Activated CD4-positive, alpha-beta T cell treated with anti-CD3 and anti-CD28 coated beads for 36 hours (primary cell): ENCODE measurements at regions of chr7 and their contacts with region 1.

Region 1: GRCh38 chr7:28155019-28155660 is 25.5 kb downstream of the JAZF1 start:
- DNase-seq: peak; percentile 15
- ATAC-seq: peak; percentile 68
- H3K4me3 Mint-ChIP-seq: no peak overlapping the region
- H3K27ac Mint-ChIP-seq: peak overlapping the region; percentile 77
- H3K4me1 Mint-ChIP-seq: peaks cover 65% of the 10 kb centered on the region
- H3K27me3 Mint-ChIP-seq: no peaks in the 10 kb centered on the region

Region 2: GRCh38 chr7:27739909-27740448 is 415.2 kb before region 1 on chr7 and contains the start of gene TAX1BP1:
- CTCF ChIA-PET with region 1: no interaction called
- POLR2A ChIA-PET with region 1: no interaction called
- intact Hi-C with region 1: loop called in 1 of 2 experiments (anchors 1 kb)
- DNase-seq: peak; percentile 98
- ATAC-seq: peak; percentile 92
- H3K4me3 Mint-ChIP-seq: peak within 1 kb of the TSS; percentile 99
- H3K27ac Mint-ChIP-seq: peak within 1 kb of the TSS; percentile 99
- H3K4me1 Mint-ChIP-seq: peaks cover 34% of the 10 kb centered on the region
- H3K27me3 Mint-ChIP-seq: no peaks in the 10 kb centered on the region
- total RNA-seq, gene TAX1BP1: 101 to 109 TPM

Region 3: GRCh38 chr7:28037220-28038010 is 117.7 kb before region 1 on chr7:
- CTCF ChIA-PET with region 1: no interaction called
- POLR2A ChIA-PET with region 1: no interaction called
- intact Hi-C with region 1: loop called (anchors 1 to 2 kb)
- DNase-seq: peak; percentile 56
- ATAC-seq: peak; percentile 91
- H3K4me3 Mint-ChIP-seq: peak overlapping the region; percentile 12
- H3K27ac Mint-ChIP-seq: no peak overlapping the region
- H3K4me1 Mint-ChIP-seq: peaks cover 36% of the 10 kb centered on the region
- H3K27me3 Mint-ChIP-seq: peaks cover 10% of the 10 kb centered on the region

Region 4: GRCh38 chr7:28207486-28208158 is 52.5 kb after region 1 on chr7:
- CTCF ChIA-PET with region 1: no interaction called
- POLR2A ChIA-PET with region 1: no interaction called
- intact Hi-C with region 1: loop called (anchors 1 kb)
- DNase-seq: no peak
- ATAC-seq: peak; percentile 81
- H3K4me3 Mint-ChIP-seq: peak overlapping the region; percentile 16
- H3K27ac Mint-ChIP-seq: peak overlapping the region; percentile 18
- H3K4me1 Mint-ChIP-seq: peaks cover 38% of the 10 kb centered on the region
- H3K27me3 Mint-ChIP-seq: peaks cover 12% of the 10 kb centered on the region

Region 5: GRCh38 chr7:28292834-28293526 is 137.8 kb after region 1 on chr7:
- CTCF ChIA-PET with region 1: no interaction called
- POLR2A ChIA-PET with region 1: interaction called, 8 read pairs
- intact Hi-C with region 1: loop called (anchors 1 kb)
- DNase-seq: peak; percentile 22
- ATAC-seq: peak; percentile 92
- H3K4me3 Mint-ChIP-seq: no peak overlapping the region
- H3K27ac Mint-ChIP-seq: no peak overlapping the region
- H3K4me1 Mint-ChIP-seq: peaks cover 21% of the 10 kb centered on the region
- H3K27me3 Mint-ChIP-seq: peaks cover 19% of the 10 kb centered on the region

Region 6: DNA sequence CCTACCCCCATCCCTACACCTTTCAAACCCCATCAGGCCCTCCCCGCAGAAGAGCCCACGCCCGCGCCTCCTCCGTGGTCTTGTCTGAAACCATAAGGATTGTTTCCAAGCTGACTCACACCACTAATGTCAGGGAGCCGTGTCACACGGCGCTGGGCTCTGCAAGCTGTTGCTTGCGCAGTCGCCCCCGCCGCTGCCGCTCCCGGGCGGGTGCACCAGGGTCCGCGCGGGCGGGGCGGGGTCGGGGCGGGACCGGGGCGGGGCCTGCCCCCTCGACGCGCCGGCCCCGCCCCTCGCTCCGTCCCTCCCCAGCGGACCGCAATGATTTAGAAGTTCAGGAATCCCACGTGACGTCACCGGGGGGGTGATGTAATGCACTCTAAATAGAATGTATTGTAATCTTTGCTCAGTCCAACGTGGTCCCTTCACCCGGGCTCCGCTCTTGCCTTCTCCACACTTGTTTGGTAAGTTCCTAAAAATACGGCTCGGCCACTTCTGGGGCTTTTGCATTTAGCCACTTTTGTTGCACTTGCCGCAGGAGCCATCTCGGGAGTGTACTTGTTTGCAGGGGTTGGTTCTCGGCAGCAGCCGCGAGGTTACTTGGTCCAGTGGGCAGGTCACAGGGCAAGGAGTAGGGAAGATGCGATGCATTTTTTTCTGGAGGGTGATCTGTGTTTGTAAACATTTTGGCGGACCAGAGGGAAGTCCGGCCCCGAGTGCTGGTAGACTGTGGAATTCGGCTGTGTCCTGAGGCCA is 254.0 kb after region 1 on chr7:
- CTCF ChIA-PET with region 1: no interaction called
- POLR2A ChIA-PET with region 1: no interaction called
- intact Hi-C with region 1: loop called (anchors 2 to 10 kb)
- DNase-seq: peak; percentile 91
- ATAC-seq: peak; percentile 86
- H3K4me3 Mint-ChIP-seq: peak overlapping the region; percentile 75
- H3K27ac Mint-ChIP-seq: peak overlapping the region; percentile 70
- H3K4me1 Mint-ChIP-seq: peaks cover 39% of the 10 kb centered on the region
- H3K27me3 Mint-ChIP-seq: peaks cover 62% of the 10 kb centered on the region